Breast epithelium (tissue), 4 donors: ENCODE measurements at regions of chr2 and their contacts with region 1.

Region 1: GRCh38 chr2:204972606-204973336 is 427.5 kb downstream of the PARD3B start:
- DNase-seq: no peak
- H3K4me3 ChIP-seq: no peak overlapping the region
- H3K27ac ChIP-seq: no peak overlapping the region
- H3K4me1 ChIP-seq: no peaks in the 10 kb centered on the region
- H3K27me3 ChIP-seq: no peaks in the 10 kb centered on the region
- CTCF ChIP-seq: no peak
- POLR2A ChIP-seq: no peak

Region 2: DNA sequence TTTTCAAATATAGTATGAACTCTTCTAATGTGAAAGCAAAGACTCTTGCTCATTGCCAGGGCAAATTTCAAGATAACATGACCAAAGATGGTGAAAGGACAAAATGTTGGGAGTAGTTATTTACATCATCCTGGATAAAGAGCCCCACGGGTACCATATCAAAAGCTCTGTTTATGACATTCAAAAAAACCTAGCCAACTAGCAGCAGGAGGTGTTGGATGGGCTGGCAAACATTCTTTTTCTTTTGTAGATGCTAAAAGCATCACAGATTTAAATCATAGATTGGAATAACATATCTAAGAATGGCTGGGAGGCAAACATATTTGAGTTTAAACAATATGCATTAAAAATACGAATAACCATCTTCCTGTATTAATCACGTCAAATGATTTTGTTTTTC is 882.8 kb before region 1 on chr2:
- intact Hi-C with region 1: loop called (anchors 10 kb)
- DNase-seq: no peak
- H3K4me3 ChIP-seq: no peak overlapping the region
- H3K27ac ChIP-seq: no peak overlapping the region
- H3K4me1 ChIP-seq: no peaks in the 10 kb centered on the region
- H3K27me3 ChIP-seq: no peaks in the 10 kb centered on the region
- CTCF ChIP-seq: no peak
- POLR2A ChIP-seq: no peak

Region 3: DNA sequence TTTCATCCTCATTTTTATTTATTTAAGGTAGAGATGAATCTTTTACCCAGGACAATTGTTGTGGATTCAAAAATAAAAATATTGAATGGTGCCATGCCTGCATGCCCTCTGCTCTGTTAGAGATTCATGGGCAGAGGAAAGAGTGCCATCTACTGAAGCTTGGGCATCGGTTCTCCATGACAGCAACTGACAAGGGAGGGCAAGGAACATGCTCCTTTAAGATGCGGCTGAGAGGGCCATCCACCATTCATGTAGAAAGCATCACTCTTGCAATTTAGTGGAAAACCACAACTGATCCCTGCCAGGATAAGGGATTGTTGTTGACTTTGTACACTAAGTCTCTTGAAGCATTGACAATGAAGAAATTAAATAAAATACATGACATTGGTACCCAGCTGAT is 347.6 kb before region 1 on chr2:
- intact Hi-C with region 1: no loop called
- DNase-seq: no peak
- H3K4me3 ChIP-seq: no peak overlapping the region
- H3K27ac ChIP-seq: no peak overlapping the region
- H3K4me1 ChIP-seq: no peaks in the 10 kb centered on the region
- H3K27me3 ChIP-seq: no peaks in the 10 kb centered on the region
- CTCF ChIP-seq: no peak
- POLR2A ChIP-seq: no peak